ENCODE measurements at regions of chr17 and their contacts with region 1.

Region 1: GRCh38 chr17:75843561-75844529 is at the start of gene UNC13D:
- DNase-seq: peak in 1 of 10 donors; percentile 80

Region 2: GRCh38 chr17:75779231-75779986 is 64.4 kb before region 1 on chr17:
- intact Hi-C with region 1: loop called (anchors 5 kb)
- DNase-seq: peak; percentile 92 to 99 (median 96)

Region 3: GRCh38 chr17:76014925-76015261 is 171.0 kb after region 1 on chr17:
- intact Hi-C with region 1: no loop called
- DNase-seq: peak in 1 of 10 donors; percentile 84